Endothelial cell of umbilical vein (primary cell): ENCODE measurements at regions of chr7 and their contacts with region 1.

Region 1: GRCh38 chr7:134613623-134614347 is 32.9 kb upstream of the BPGM start:
- DNase-seq: peak; percentile 99
- H3K4me3 ChIP-seq: peak overlapping the region in 1 of 3 experiments; percentile 3
- H3K27ac ChIP-seq: peak overlapping the region; percentile 85
- H3K4me1 ChIP-seq: peaks cover 28% of the 10 kb centered on the region
- H3K27me3 ChIP-seq: no peaks in the 10 kb centered on the region
- CTCF ChIP-seq: no peak
- POLR2A ChIP-seq: peak; percentile 64

Region 2: GRCh38 chr7:134058980-134059379 is 554.8 kb before region 1 on chr7:
- CTCF ChIA-PET with region 1: no interaction called
- POLR2A ChIA-PET with region 1: no interaction called
- dilution Hi-C with region 1: no loop called
- intact Hi-C with region 1: no loop called
- DNase-seq: no peak
- H3K4me3 ChIP-seq: no peak overlapping the region
- H3K27ac ChIP-seq: no peak overlapping the region
- H3K4me1 ChIP-seq: no peaks in the 10 kb centered on the region
- H3K27me3 ChIP-seq: no peaks in the 10 kb centered on the region
- CTCF ChIP-seq: no peak
- POLR2A ChIP-seq: no peak

Region 3: DNA sequence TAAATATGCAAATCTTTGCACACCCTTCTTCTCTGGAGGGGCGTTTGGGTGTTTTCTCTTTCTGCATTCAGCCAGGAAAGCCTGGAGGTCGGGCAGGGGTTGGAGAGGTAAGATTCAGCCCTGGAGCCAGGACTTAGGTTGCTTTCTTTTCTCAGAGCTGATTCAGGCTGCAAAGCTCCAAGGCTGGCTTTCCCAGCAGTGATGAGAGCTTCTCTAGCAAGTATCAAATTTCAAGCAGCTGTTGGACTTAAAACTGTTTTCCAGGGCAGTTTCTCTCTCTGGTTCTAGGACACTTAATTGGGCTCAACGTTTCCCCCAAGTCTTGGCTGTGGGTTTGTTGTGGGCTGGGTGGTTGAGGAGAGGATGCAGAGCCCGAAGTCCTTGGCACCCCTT is 85.8 kb before region 1 on chr7:
- CTCF ChIA-PET with region 1: no interaction called
- POLR2A ChIA-PET with region 1: no interaction called
- dilution Hi-C with region 1: no loop called
- intact Hi-C with region 1: no loop called
- DNase-seq: no peak
- H3K4me3 ChIP-seq: no peak overlapping the region
- H3K27ac ChIP-seq: no peak overlapping the region
- H3K4me1 ChIP-seq: no peaks in the 10 kb centered on the region
- H3K27me3 ChIP-seq: peaks cover 4 to 16% of the 10 kb centered on the region in 2 experiments
- CTCF ChIP-seq: no peak
- POLR2A ChIP-seq: no peak

Region 4: GRCh38 chr7:134669845-134670373 is 56.1 kb after region 1 on chr7:
- CTCF ChIA-PET with region 1: no interaction called
- POLR2A ChIA-PET with region 1: no interaction called
- dilution Hi-C with region 1: no loop called
- intact Hi-C with region 1: loop called (anchors 1 kb)
- DNase-seq: peak; percentile 99
- H3K4me3 ChIP-seq: peak overlapping the region in 1 of 3 experiments; percentile 10
- H3K27ac ChIP-seq: peak overlapping the region; percentile 100
- H3K4me1 ChIP-seq: peaks cover 50% of the 10 kb centered on the region
- H3K27me3 ChIP-seq: no peaks in the 10 kb centered on the region
- CTCF ChIP-seq: no peak
- POLR2A ChIP-seq: no peak

Region 5: GRCh38 chr7:134730411-134730829 is 116.6 kb after region 1 on chr7:
- CTCF ChIA-PET with region 1: no interaction called
- POLR2A ChIA-PET with region 1: no interaction called
- dilution Hi-C with region 1: no loop called
- intact Hi-C with region 1: no loop called
- DNase-seq: no peak
- H3K4me3 ChIP-seq: no peak overlapping the region
- H3K27ac ChIP-seq: no peak overlapping the region
- H3K4me1 ChIP-seq: no peaks in the 10 kb centered on the region
- H3K27me3 ChIP-seq: no peaks in the 10 kb centered on the region
- CTCF ChIP-seq: no peak
- POLR2A ChIP-seq: no peak

Region 6: DNA sequence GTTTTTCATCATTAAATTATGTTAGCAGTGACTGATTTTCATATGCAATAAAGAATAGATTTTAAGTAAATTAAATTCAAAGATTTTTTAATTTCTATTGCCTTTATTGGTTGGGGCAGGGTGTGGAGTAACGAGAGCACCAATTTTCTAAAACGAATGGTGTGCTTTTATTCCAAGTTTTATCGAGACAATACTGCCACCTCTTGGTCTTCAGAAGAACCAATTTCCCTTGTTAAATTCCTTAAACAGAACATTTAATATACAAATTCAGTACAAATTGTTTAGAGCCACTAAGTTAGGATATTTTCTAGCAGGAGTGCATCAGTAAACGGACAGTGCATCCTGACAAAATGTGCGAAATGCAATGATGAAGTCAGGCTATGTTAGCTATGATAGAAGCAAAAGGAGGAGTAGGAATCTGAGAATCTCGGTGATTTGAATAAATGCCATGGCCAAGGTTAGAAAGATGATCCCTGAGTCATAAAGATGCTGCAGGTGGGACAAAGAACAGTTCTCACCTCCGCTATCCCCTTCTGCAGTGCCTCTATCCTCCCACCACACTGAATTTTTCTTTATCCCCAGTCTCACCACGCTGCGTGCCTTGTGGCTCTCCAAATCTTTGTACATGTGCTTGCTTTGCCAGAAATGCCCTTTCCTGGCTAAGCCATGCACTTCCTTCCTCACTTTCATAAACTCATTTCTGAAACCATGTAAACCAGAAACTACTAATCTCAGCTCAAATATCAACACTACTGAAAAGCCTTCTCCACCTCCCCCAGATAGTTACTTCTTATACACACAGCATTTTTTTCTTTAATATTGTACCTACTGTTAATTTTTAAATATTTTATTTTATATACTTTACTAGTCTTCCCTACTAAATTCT is 340.7 kb after region 1 on chr7:
- CTCF ChIA-PET with region 1: interaction called, 3 read pairs
- POLR2A ChIA-PET with region 1: no interaction called
- dilution Hi-C with region 1: no loop called
- intact Hi-C with region 1: loop called (anchors 5 kb)
- DNase-seq: peak; percentile 38
- H3K4me3 ChIP-seq: no peak overlapping the region
- H3K27ac ChIP-seq: no peak overlapping the region
- H3K4me1 ChIP-seq: no peaks in the 10 kb centered on the region
- H3K27me3 ChIP-seq: no peaks in the 10 kb centered on the region
- CTCF ChIP-seq: peak; percentile 20 to 37
- POLR2A ChIP-seq: no peak